GM13977 (cell line): ENCODE measurements at regions of chr11 and their contacts with region 1.

Region 1: DNA sequence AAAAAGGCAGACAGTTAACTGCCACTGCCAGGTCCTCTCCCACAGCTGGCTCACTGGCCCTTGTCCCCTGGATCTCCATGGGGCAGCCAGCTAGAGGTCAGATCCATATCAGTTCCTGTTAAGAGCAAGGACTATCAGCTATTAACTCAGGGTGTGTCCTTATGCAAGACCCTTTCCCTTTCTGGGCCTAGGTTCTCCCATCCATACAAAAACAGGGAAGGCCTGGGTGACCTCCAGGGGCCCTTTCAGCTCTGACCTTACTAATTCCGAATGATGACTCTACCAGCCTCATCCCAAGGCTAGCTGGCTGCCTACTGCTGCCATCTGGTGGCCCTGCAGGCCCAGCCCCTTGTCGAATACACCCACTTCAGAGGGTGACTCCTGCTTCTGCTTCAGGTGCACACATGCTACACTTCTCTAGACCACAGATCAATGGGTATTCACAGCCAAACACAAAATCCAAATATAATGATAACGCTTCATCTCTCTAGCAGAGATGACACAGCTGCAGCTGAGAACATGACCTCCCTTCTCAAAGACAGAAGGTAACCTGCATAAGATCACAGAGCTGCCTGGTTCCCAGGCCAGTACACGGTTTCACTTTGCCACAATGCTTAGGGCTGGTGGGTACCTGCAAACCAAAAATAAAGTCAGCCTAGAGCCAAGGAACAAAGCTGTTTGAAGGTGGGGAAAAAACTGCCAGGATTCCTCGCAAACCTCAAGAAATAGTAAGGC is 34.1 kb downstream of the SERGEF start:
- DNase-seq: peak; percentile 31
- CTCF ChIP-seq: peak; percentile 77

Region 2: GRCh38 chr11:17384002-17384511 is 594.7 kb before region 1 on chr11:
- in situ Hi-C with region 1: no loop called
- DNase-seq: peak; percentile 61
- CTCF ChIP-seq: peak; percentile 87

Region 3: GRCh38 chr11:17544181-17544622 is 434.5 kb before region 1 on chr11 and contains the start of gene USH1C:
- in situ Hi-C with region 1: no loop called
- DNase-seq: no peak
- CTCF ChIP-seq: no peak

Region 4: GRCh38 chr11:17722000-17722643 is 256.6 kb before region 1 on chr11:
- in situ Hi-C with region 1: loop called (anchors 10 kb)
- DNase-seq: no peak
- CTCF ChIP-seq: peak; percentile 1

Region 5: GRCh38 chr11:17760102-17761029 is 218.4 kb before region 1 on chr11:
- in situ Hi-C with region 1: loop called (anchors 10 kb)
- DNase-seq: peak; percentile 78
- CTCF ChIP-seq: peak; percentile 72

Region 6: DNA sequence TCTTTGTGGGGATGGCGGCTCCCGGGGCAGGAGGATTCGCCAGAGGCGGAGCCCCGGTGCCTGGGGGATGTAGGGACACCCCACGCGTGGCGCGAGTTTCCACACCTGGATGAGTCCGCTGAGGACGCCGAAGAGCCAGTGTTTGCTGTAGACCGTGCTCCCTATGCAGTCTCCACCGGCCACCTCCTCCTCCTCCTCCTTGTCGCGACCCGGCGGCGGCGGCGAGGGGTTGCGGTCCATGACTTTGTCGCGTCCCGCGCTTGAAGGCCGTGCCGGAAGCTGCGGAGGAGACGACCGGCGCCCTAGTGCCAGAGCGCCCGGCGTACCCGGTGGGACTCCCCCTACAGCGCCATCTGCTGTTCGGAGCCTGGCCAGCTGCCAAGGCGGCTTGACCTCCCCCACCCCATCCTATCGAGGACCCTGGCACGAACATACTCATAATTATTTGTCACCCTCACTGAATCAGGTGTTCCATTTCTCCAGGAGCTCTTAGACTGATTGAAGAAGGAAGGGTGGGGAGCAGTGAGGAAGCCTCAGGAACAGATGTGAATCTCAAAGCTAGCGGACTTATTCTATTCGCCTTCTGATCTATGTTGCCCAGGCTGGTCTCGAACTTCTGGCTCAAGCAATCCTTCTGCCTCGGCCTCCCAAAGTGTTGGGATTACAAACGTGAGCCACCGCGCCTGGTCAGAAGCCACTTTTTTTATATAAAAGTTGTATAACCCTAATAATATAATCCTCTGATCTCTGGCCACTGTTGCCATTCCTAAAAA is 127.3 kb after region 1 on chr11 and contains the start of gene SAAL1:
- in situ Hi-C with region 1: loop called (anchors 10 kb)
- DNase-seq: peak; percentile 92
- CTCF ChIP-seq: peak; percentile 92